Motor neuron (in vitro differentiated cells): ENCODE measurements at regions of chr5 and their contacts with region 1.

Region 1: GRCh38 chr5:9774472-9775079 is 144.4 kb upstream of the TAS2R1 start:
- ATAC-seq: peak in 3 of 8 experiments; percentile 60 to 91 (median 83)
- H3K4me3 ChIP-seq: no peak overlapping the region
- H3K27ac ChIP-seq: no peak overlapping the region
- H3K4me1 ChIP-seq: no peaks in the 10 kb centered on the region

Region 2: GRCh38 chr5:10030210-10030831 is 255.7 kb after region 1 on chr5:
- in situ Hi-C with region 1: loop called in 1 of 9 experiments (anchors 25 kb)
- ATAC-seq: peak in 3 of 8 experiments; percentile 66 to 88 (median 82)
- H3K4me3 ChIP-seq: no peak overlapping the region
- H3K27ac ChIP-seq: no peak overlapping the region
- H3K4me1 ChIP-seq: no peaks in the 10 kb centered on the region

Region 3: GRCh38 chr5:10111571-10111970 is 337.0 kb after region 1 on chr5:
- in situ Hi-C with region 1: loop called in 1 of 9 experiments (anchors 10 kb)
- ATAC-seq: peak in 7 of 8 experiments; percentile 19 to 100 (median 87)
- H3K4me3 ChIP-seq: no peak overlapping the region
- H3K27ac ChIP-seq: no peak overlapping the region
- H3K4me1 ChIP-seq: no peaks in the 10 kb centered on the region